HepG2 (cell line): ENCODE measurements at regions of chr1 and their contacts with region 1.

Region 1: DNA sequence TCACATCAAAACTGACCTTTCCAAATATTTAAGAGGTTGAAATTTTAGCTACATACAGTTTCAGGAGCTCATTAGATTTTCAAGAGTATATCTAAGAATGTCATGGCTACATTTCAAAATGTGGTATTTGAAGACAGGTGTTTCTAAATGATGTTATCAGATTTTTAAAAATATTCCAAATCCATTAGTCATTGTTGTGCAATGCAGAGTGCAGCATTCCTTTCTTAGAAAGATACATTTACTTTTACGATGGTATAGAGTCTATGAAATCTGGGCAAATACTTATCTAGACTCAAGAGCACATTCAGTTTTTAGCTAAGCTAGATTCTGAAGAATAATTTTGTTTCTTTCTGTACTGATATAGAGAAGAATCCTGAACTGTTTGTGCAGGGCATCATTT is 230.3 kb downstream of the CHRM3 start:
- DNase-seq: no peak
- ATAC-seq: no peak
- H3K4me3 ChIP-seq: no peak overlapping the region
- H3K27ac ChIP-seq: no peak overlapping the region
- H3K4me1 ChIP-seq: no peaks in the 10 kb centered on the region
- H3K27me3 ChIP-seq: no peaks in the 10 kb centered on the region; a peak in 1 of 5 replicates
- CTCF ChIP-seq: no peak
- EP300 ChIP-seq: no peak
- POLR2A ChIP-seq: no peak
- RAD21 ChIP-seq: no peak

Region 2: DNA sequence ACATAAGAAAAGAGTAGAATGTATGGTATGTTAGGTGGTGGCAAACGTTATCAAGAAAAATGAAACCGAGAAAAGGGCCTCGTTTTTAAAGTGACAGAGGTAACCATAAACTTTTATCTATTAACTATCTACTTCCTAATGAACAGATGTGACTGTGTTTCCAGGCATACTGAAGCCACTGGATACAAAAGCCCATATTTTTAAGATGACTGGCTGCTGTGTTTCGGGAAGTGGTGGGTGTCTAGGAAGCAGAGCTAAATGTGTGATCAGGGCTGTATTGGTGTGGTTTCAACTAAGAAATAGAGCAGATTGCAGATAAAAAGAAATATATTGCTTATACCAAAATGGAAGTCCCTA is 158.6 kb before region 1 on chr1:
- CTCF ChIA-PET with region 1: no interaction called
- POLR2A ChIA-PET with region 1: no interaction called
- in situ Hi-C with region 1: no loop called
- intact Hi-C with region 1: loop called (anchors 5 kb)
- DNase-seq: no peak
- ATAC-seq: no peak
- H3K4me3 ChIP-seq: no peak overlapping the region
- H3K27ac ChIP-seq: no peak overlapping the region
- H3K4me1 ChIP-seq: no peaks in the 10 kb centered on the region
- H3K27me3 ChIP-seq: no peaks in the 10 kb centered on the region
- CTCF ChIP-seq: no peak
- EP300 ChIP-seq: no peak
- POLR2A ChIP-seq: no peak
- RAD21 ChIP-seq: no peak

Region 3: DNA sequence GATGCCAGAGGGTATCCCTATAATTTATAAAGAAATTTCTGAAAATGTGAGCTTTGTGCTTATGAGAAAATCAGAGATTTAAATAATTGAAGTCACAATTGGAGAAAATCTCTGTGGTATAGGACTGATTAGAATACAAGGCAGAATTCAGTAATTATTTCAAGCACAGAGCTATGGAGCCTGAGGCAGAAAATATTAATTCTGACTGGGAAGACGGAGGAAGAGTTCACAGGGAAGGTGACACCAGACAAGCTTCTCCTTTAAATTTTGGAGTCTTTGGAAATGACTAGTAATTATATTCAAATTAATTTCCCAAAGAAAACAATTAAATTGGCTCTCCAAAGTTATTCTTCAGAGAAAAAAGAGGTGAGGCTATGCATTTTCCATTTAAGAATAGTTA is 108.9 kb before region 1 on chr1:
- CTCF ChIA-PET with region 1: no interaction called
- POLR2A ChIA-PET with region 1: no interaction called
- in situ Hi-C with region 1: no loop called
- intact Hi-C with region 1: no loop called
- DNase-seq: no peak
- ATAC-seq: no peak
- H3K4me3 ChIP-seq: no peak overlapping the region
- H3K27ac ChIP-seq: no peak overlapping the region
- H3K4me1 ChIP-seq: no peaks in the 10 kb centered on the region
- H3K27me3 ChIP-seq: no peaks in the 10 kb centered on the region
- CTCF ChIP-seq: no peak
- EP300 ChIP-seq: no peak
- POLR2A ChIP-seq: no peak
- RAD21 ChIP-seq: no peak